ENCODE measurements at regions of chr13 and their contacts with region 1.

Region 1: GRCh38 chr13:48580185-48580803 is 47.4 kb upstream of the RCBTB2 start:
- DNase-seq: peak; percentile 76
- H3K4me3 ChIP-seq: no peak overlapping the region
- H3K27ac ChIP-seq: no peak overlapping the region
- H3K4me1 ChIP-seq: peaks cover 0 to 17% (median 12%) of the 10 kb centered on the region in 4 donors
- H3K27me3 ChIP-seq: no peaks in the 10 kb centered on the region
- CTCF ChIP-seq: peak; percentile 49 to 73 (median 62)
- EP300 ChIP-seq: no peak
- POLR2A ChIP-seq: no peak

Region 2: DNA sequence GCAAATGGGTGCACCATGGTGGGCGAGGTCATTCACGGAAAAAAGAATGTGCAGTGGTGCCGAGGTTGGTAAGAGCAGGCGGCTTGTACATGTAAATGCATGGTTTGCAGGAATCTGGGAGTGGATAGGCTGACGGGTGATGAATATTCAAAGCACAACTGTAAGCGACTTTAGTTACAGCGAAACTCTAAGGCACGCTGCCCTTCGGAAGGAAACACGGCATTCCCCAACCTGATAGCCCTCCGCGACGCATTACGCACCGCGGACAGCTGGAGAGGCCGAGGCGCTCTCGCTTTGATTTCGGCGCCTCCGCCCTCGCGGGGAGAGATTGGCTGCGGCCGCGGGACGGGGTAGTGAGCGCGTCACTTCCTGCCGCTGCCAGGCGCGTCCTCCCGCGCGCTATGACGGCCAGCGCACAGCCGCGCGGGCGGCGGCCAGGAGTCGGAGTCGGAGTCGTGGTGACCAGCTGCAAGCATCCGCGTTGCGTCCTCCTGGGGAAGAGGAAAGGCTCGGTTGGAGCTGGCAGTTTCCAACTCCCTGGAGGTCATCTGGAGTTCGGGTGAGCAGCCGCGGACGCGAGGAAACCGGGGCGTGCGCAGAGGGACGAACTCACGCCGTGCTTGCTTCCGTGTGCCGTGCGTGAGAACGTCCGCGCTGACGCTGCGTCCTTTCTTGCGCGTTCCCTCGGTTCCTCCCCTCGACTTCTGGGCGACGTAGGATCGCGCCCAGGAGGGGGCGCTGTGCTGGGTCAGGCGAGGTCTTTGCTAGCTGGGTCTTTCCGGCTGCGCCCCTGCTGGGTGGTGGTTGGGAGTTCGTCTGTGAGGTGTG is 542.7 kb before region 1 on chr13 and contains the start of gene NUDT15:
- intact Hi-C with region 1: loop called (anchors 5 kb)
- DNase-seq: peak; percentile 96
- H3K4me3 ChIP-seq: peak within 1 kb of the TSS; percentile 62 to 78 (median 77)
- H3K27ac ChIP-seq: peak within 1 kb of the TSS; percentile 91 to 97 (median 96)
- H3K4me1 ChIP-seq: peaks cover 0 to 14% (median 14%) of the 10 kb centered on the region in 4 donors
- H3K27me3 ChIP-seq: no peaks in the 10 kb centered on the region
- CTCF ChIP-seq: peak; percentile 88 to 98 (median 98)
- EP300 ChIP-seq: peak in 3 of 4 donors; percentile 33 to 81 (median 76)
- POLR2A ChIP-seq: peak; percentile 59 to 66
- total RNA-seq, gene NUDT15: 6.6 to 8.9 (median 7.8) TPM

Region 3: GRCh38 chr13:48126944-48127830 is 453.1 kb before region 1 on chr13:
- intact Hi-C with region 1: loop called (anchors 10 kb)
- DNase-seq: peak; percentile 87
- H3K4me3 ChIP-seq: no peak overlapping the region
- H3K27ac ChIP-seq: peak overlapping the region; percentile 83 to 86 (median 84)
- H3K4me1 ChIP-seq: peaks cover 0 to 56% (median 48%) of the 10 kb centered on the region in 4 donors
- H3K27me3 ChIP-seq: no peaks in the 10 kb centered on the region
- CTCF ChIP-seq: peak; percentile 32 to 74 (median 66)
- EP300 ChIP-seq: peak in 1 of 4 donors; percentile 12
- POLR2A ChIP-seq: no peak

Region 4: GRCh38 chr13:48334534-48335127 is 245.7 kb before region 1 on chr13:
- intact Hi-C with region 1: loop called (anchors 10 kb)
- DNase-seq: no peak
- H3K4me3 ChIP-seq: no peak overlapping the region
- H3K27ac ChIP-seq: no peak overlapping the region
- H3K4me1 ChIP-seq: peaks cover 0 to 6% (median 0%) of the 10 kb centered on the region in 4 donors
- H3K27me3 ChIP-seq: no peaks in the 10 kb centered on the region
- CTCF ChIP-seq: peak in 1 of 4 experiments; percentile 29
- EP300 ChIP-seq: no peak
- POLR2A ChIP-seq: no peak

Region 5: GRCh38 chr13:48412881-48413351 is 167.4 kb before region 1 on chr13 and contains the start of gene LPAR6:
- intact Hi-C with region 1: loop called (anchors 5 kb)
- DNase-seq: no peak
- H3K4me3 ChIP-seq: peak within 1 kb of the TSS; percentile 34 to 52 (median 48)
- H3K27ac ChIP-seq: peak within 1 kb of the TSS; percentile 68 to 72 (median 70)
- H3K4me1 ChIP-seq: peaks cover 0 to 6% (median 0%) of the 10 kb centered on the region in 4 donors
- H3K27me3 ChIP-seq: no peaks in the 10 kb centered on the region
- CTCF ChIP-seq: no peak
- EP300 ChIP-seq: no peak
- POLR2A ChIP-seq: peak; percentile 37 to 71
- total RNA-seq, gene LPAR6: 11.5 to 24.2 (median 15.0) TPM

Region 6: DNA sequence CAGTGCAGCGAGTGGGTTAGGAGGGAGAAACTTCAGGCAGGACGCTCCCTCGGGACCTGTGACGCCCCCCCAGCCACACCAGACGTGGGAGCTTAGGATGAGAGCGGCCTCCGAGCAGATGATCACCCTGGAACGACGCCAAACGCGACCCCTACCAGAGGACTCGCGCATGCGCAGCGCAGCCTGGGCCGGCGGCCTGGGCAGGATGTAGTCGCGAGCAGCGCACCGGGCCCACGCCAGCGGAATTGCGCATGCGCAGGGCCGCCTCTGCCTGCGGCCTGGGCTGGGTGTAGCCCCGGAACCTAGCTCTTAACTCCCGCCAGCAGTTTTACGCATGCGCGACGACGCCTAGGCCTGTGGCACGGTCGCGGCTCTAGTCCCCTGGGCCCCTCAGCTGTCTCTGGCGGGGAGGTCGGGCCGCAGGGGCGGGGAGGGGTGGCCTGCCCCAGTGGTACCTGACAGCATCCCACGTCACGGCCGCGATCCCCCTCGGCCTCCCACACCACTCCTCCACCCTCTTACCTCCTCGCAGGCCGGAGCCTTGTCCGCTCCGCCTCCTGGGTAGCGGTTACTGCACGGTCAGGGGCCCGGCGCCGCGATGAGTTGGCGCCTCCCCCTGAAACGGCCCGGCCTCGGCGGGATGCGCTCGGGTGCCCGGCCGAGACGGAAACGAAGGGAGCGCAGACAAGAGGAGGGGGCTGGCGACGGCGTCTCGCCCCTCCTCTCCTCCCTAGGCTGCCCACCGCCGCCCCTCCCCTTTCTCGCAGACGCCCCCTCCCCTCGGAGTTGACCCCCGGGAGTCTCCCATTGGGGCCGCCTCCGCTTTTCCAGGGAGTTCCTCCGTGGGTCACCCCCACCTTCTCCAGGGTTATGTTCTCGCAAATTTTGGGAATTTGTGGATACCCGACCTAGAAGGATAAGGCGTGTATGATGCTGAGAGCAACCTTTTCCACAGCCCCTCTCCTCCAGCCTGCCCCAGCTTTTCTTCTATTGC is 47.5 kb before region 1 on chr13 and contains the start of gene RCBTB2:
- intact Hi-C with region 1: loop called (anchors 2 kb)
- DNase-seq: peak; percentile 99
- H3K4me3 ChIP-seq: peak within 1 kb of the TSS; percentile 77 to 81 (median 78)
- H3K27ac ChIP-seq: peak within 1 kb of the TSS; percentile 94 to 98 (median 97)
- H3K4me1 ChIP-seq: peaks cover 0 to 19% (median 11%) of the 10 kb centered on the region in 4 donors
- H3K27me3 ChIP-seq: no peaks in the 10 kb centered on the region
- CTCF ChIP-seq: no peak
- EP300 ChIP-seq: peak in 1 of 4 donors; percentile 57
- POLR2A ChIP-seq: peak; percentile 83 to 93
- total RNA-seq, gene RCBTB2: 8.6 to 21.9 (median 14.9) TPM